HepG2 (cell line): ENCODE measurements at regions of chr4 and their contacts with region 1.

Region 1: GRCh38 chr4:56828784-56829535 is 7.5 kb upstream of the SPINK2 start:
- DNase-seq: no peak
- ATAC-seq: no peak
- H3K4me3 ChIP-seq: no peak overlapping the region
- H3K27ac ChIP-seq: no peak overlapping the region
- H3K4me1 ChIP-seq: no peaks in the 10 kb centered on the region
- H3K27me3 ChIP-seq: 0 out of 5 replicates have a peak, but pooled peaks cover 0 to 3% of the 10 kb centered on the region in 2 experiments
- CTCF ChIP-seq: no peak
- EP300 ChIP-seq: no peak
- POLR2A ChIP-seq: no peak
- RAD21 ChIP-seq: no peak

Region 2: GRCh38 chr4:56424697-56425514 is 404.1 kb before region 1 on chr4:
- CTCF ChIA-PET with region 1: no interaction called
- POLR2A ChIA-PET with region 1: no interaction called
- in situ Hi-C with region 1: no loop called
- intact Hi-C with region 1: loop called (anchors 10 kb)
- DNase-seq: no peak
- ATAC-seq: no peak
- H3K4me3 ChIP-seq: no peak overlapping the region
- H3K27ac ChIP-seq: no peak overlapping the region
- H3K4me1 ChIP-seq: peaks cover 26% of the 10 kb centered on the region
- H3K27me3 ChIP-seq: no peaks in the 10 kb centered on the region
- CTCF ChIP-seq: peak; percentile 44
- EP300 ChIP-seq: no peak
- POLR2A ChIP-seq: no peak
- RAD21 ChIP-seq: no peak

Region 3: GRCh38 chr4:56587091-56587490 is 241.9 kb before region 1 on chr4:
- CTCF ChIA-PET with region 1: no interaction called
- POLR2A ChIA-PET with region 1: no interaction called
- in situ Hi-C with region 1: no loop called
- intact Hi-C with region 1: no loop called
- DNase-seq: no peak
- ATAC-seq: no peak
- H3K4me3 ChIP-seq: no peak overlapping the region
- H3K27ac ChIP-seq: no peak overlapping the region
- H3K4me1 ChIP-seq: no peaks in the 10 kb centered on the region
- H3K27me3 ChIP-seq: no peaks in the 10 kb centered on the region
- CTCF ChIP-seq: no peak
- EP300 ChIP-seq: no peak
- POLR2A ChIP-seq: no peak
- RAD21 ChIP-seq: no peak

Region 4: GRCh38 chr4:56728512-56728911 is 100.4 kb before region 1 on chr4:
- CTCF ChIA-PET with region 1: no interaction called
- POLR2A ChIA-PET with region 1: no interaction called
- in situ Hi-C with region 1: no loop called
- intact Hi-C with region 1: no loop called
- DNase-seq: no peak
- ATAC-seq: no peak
- H3K4me3 ChIP-seq: no peak overlapping the region
- H3K27ac ChIP-seq: no peak overlapping the region
- H3K4me1 ChIP-seq: no peaks in the 10 kb centered on the region
- H3K27me3 ChIP-seq: no peaks in the 10 kb centered on the region; a peak in 2 of 5 replicates
- CTCF ChIP-seq: no peak
- EP300 ChIP-seq: no peak
- POLR2A ChIP-seq: no peak
- RAD21 ChIP-seq: no peak